ENCODE measurements at regions of chr3 and their contacts with region 1.

Region 1: DNA sequence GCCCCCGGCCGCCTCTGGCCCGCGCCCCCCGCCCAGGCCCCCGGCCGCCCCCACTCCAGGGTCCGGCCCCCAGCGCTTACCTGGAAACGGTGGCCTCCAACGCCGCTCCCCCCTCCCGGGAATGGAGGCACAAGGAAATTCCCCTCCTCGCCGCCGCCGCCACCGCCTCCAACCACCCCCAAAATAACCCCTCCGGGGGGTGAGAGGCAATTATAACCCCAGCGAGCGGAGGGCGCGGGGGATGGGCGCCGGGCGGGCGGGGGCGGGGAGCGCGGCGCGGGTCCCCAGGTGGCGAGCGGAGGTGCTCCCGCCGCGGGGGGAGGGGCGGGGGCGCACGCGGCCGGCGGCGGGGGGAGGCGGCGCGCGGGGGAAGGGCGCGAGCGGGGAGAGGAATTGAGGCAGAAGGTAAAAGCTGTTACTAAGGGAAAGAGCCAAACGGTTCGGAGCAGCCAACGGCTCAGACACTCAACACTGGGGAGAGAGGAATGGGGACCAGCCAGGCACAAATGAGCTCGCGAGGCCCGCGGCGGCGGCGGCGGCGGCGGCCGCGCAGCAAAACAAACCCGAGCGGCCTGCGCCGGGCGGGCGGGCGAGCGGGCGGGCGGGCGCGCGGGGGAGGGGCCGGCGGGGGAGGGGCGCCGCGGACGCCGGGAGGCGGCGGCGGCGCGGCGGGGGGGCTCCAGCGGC is at the start of gene TBL1XR1:
- DNase-seq: peak; percentile 90 to 92
- H3K4me3 ChIP-seq: peak within 1 kb of the TSS; percentile 70
- H3K4me3 Mint-ChIP-seq: peak within 1 kb of the TSS; percentile 95
- H3K27ac Mint-ChIP-seq: peak within 1 kb of the TSS; percentile 95
- H3K4me1 ChIP-seq: peaks cover 18% of the 10 kb centered on the region
- H3K4me1 Mint-ChIP-seq: peaks cover 17% of the 10 kb centered on the region
- H3K27me3 ChIP-seq: no peaks in the 10 kb centered on the region
- H3K27me3 Mint-ChIP-seq: no peaks in the 10 kb centered on the region
- CTCF ChIP-seq: no peak
- total RNA-seq, gene TBL1XR1: 127 and 140 TPM in 2 replicates

Region 2: GRCh38 chr3:177050501-177051237 is 146.5 kb before region 1 on chr3:
- CTCF ChIA-PET with region 1: no interaction called
- POLR2A ChIA-PET with region 1: no interaction called
- intact Hi-C with region 1: loop called (anchors 2 kb)
- DNase-seq: peak in 1 of 2 experiments; percentile 17
- H3K4me3 ChIP-seq: no peak overlapping the region
- H3K4me3 Mint-ChIP-seq: no peak overlapping the region
- H3K27ac Mint-ChIP-seq: no peak overlapping the region
- H3K4me1 ChIP-seq: no peaks in the 10 kb centered on the region
- H3K4me1 Mint-ChIP-seq: peaks cover 6% of the 10 kb centered on the region
- H3K27me3 ChIP-seq: no peaks in the 10 kb centered on the region
- H3K27me3 Mint-ChIP-seq: no peaks in the 10 kb centered on the region
- CTCF ChIP-seq: peak; percentile 18 to 38

Region 3: GRCh38 chr3:177284383-177284881 is 87.2 kb after region 1 on chr3:
- CTCF ChIA-PET with region 1: no interaction called
- POLR2A ChIA-PET with region 1: no interaction called
- intact Hi-C with region 1: loop called (anchors 5 kb)
- DNase-seq: peak; percentile 43 to 58
- H3K4me3 ChIP-seq: no peak overlapping the region
- H3K4me3 Mint-ChIP-seq: no peak overlapping the region
- H3K27ac Mint-ChIP-seq: no peak overlapping the region
- H3K4me1 ChIP-seq: peaks cover 72% of the 10 kb centered on the region
- H3K4me1 Mint-ChIP-seq: peaks cover 22% of the 10 kb centered on the region
- H3K27me3 ChIP-seq: no peaks in the 10 kb centered on the region
- H3K27me3 Mint-ChIP-seq: no peaks in the 10 kb centered on the region
- CTCF ChIP-seq: no peak

Region 4: DNA sequence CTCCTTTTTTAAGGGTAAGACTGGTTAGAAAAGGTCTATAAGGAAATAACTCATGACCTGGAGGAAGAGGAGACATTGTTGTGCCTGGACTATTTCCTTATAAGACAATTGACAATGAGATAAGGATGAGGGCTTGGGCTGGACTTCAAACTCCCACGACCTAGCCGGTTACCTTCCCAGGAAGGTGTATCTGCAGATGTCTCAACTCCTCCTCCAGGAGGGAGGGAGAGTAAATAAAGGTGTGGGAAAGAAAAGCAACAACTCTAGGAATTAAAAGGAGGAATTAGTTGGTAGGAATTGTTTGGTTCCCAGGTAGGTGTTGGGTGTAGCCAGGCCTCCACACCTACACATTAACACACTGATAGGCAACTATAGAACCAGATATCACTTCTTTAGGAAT is 97.9 kb after region 1 on chr3:
- CTCF ChIA-PET with region 1: no interaction called
- POLR2A ChIA-PET with region 1: interaction called, 10 read pairs
- intact Hi-C with region 1: loop called (anchors 1 kb)
- DNase-seq: peak; percentile 75 to 91
- H3K4me3 ChIP-seq: no peak overlapping the region
- H3K4me3 Mint-ChIP-seq: peak overlapping the region; percentile 37
- H3K27ac Mint-ChIP-seq: peak overlapping the region; percentile 78
- H3K4me1 ChIP-seq: peaks cover 34% of the 10 kb centered on the region
- H3K4me1 Mint-ChIP-seq: peaks cover 7% of the 10 kb centered on the region
- H3K27me3 ChIP-seq: no peaks in the 10 kb centered on the region
- H3K27me3 Mint-ChIP-seq: no peaks in the 10 kb centered on the region
- CTCF ChIP-seq: no peak

Region 5: DNA sequence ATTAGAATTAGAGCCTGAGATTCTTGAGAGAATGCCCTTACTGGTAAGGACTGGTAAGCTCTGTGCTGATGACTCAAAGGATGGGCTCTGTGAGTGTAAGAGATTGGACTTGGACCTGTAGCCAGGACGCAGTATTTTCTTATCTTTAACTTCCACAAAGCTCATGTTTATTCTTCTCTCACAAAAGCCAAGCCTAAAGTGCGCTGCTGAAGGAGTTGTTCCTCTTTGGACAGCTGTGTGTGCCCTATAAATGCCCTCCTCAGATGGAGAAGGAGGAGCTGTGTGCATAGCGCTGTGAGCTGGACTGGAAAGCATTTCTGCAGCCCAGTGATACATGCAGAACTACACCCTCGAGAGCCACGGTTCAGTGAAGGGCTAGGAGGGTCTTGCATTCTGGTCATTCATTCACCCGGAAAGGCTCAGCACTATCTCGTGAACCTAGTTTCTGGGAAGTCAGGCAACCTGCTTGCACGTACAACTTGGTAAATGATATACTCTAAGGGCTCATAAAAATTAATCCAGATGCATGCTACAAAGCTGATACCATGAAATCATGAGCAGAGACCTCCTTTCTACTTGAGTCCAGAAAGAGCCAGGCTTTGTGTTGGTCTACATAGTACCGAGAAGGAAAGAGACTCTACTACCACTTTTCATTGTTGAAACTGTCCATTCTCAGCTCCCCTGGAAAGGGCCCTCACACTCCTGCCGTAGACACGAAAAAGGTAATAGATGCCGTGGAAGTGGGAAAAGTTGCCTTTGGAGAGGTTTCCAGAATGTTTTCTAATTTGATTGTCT is 103.1 kb after region 1 on chr3:
- CTCF ChIA-PET with region 1: no interaction called
- POLR2A ChIA-PET with region 1: interaction called, 10 read pairs
- intact Hi-C with region 1: loop called (anchors 1 kb)
- DNase-seq: peak; percentile 79 to 95
- H3K4me3 ChIP-seq: peak overlapping the region; percentile 34
- H3K4me3 Mint-ChIP-seq: peak overlapping the region; percentile 68
- H3K27ac Mint-ChIP-seq: peak overlapping the region; percentile 82
- H3K4me1 ChIP-seq: peaks cover 30% of the 10 kb centered on the region
- H3K4me1 Mint-ChIP-seq: peaks cover 6% of the 10 kb centered on the region
- H3K27me3 ChIP-seq: no peaks in the 10 kb centered on the region
- H3K27me3 Mint-ChIP-seq: no peaks in the 10 kb centered on the region
- CTCF ChIP-seq: no peak

Region 6: GRCh38 chr3:177337541-177338331 is 140.6 kb after region 1 on chr3:
- CTCF ChIA-PET with region 1: no interaction called
- POLR2A ChIA-PET with region 1: no interaction called
- intact Hi-C with region 1: loop called (anchors 1 kb)
- DNase-seq: no peak
- H3K4me3 ChIP-seq: no peak overlapping the region
- H3K4me3 Mint-ChIP-seq: peak overlapping the region; percentile 33
- H3K27ac Mint-ChIP-seq: peak overlapping the region; percentile 53
- H3K4me1 ChIP-seq: peaks cover 36% of the 10 kb centered on the region
- H3K4me1 Mint-ChIP-seq: peaks cover 14% of the 10 kb centered on the region
- H3K27me3 ChIP-seq: no peaks in the 10 kb centered on the region
- H3K27me3 Mint-ChIP-seq: no peaks in the 10 kb centered on the region
- CTCF ChIP-seq: no peak

Measured in Caco-2 (cell line).